GM10248 (cell line): ENCODE measurements at regions of chr11 and their contacts with region 1.

Region 1: GRCh38 chr11:75406338-75406777 is 7.0 kb downstream of the RPS3 start:
- DNase-seq: no peak
- CTCF ChIP-seq: no peak

Region 2: GRCh38 chr11:75421035-75421602 is 14.8 kb after region 1 on chr11:
- CTCF ChIA-PET with region 1: interaction called, 28 read pairs
- POLR2A ChIA-PET with region 1: interaction called, 10 read pairs
- DNase-seq: no peak
- CTCF ChIP-seq: no peak

Region 3: GRCh38 chr11:75428281-75428724 is 21.9 kb after region 1 on chr11:
- CTCF ChIA-PET with region 1: interaction called, 22 read pairs
- POLR2A ChIA-PET with region 1: interaction called, 3 read pairs
- DNase-seq: peak; percentile 88
- CTCF ChIP-seq: no peak